CD8-positive, alpha-beta memory T cell (primary cell): ENCODE measurements at regions of chr1 and their contacts with region 1.

Region 1: DNA sequence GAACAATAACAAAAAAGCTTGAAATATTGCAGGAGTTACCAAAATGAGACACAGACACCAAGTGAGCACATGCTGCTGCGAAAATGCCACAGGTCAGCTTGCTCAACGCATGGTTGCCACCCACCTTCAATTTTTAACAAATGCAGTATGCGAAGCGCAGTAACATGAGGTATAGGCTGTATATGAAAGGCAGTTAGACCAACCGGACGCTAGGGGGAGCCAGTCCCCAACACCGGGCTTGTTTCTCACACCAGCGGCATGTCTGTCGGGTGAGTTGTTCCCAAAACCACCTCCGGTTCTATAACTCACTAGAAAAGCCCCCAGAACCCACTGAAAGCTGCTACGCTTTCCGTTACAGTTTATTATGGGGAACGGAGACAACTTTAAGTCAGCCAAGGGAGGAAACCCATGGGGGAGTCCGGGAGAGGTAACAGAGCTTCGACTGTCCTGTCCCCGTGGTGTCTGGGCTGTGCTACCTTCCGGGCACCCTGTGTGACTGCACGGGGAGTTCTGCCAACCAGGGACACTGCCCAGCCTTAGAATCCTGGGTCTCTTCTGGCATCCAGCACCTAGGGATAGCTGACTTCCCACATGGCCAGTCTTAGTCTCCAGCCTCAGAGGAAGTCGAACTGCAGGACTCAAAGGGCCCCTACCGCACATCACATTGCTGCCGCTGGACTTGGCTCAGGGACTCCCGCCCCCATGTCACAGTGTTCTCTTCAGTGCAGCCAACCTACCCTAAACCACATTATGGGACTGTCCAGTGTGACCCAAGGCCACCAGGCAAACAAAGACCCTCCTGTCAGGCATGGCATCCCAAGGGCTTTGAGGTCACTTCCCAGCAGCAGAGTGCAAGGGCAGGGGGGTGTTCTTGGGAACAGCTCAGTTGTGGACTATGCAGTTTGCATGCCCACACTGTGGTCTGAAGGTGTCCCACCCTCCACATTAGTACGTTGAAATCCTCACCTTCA is 14.0 kb downstream of the RNF187 start:
- DNase-seq: peak; percentile 79 to 90 (median 82)
- H3K4me3 ChIP-seq: peak overlapping the region; percentile 46
- H3K4me3 Mint-ChIP-seq: peak overlapping the region; percentile 41 to 84 (median 79)
- H3K27ac ChIP-seq: no peak overlapping the region
- H3K27ac Mint-ChIP-seq: peak overlapping the region; percentile 26 to 86 (median 71)
- H3K4me1 ChIP-seq: peaks cover 14% of the 10 kb centered on the region
- H3K4me1 Mint-ChIP-seq: peaks cover 19 to 38% (median 28%) of the 10 kb centered on the region in 3 donors
- H3K27me3 ChIP-seq: no peaks in the 10 kb centered on the region
- H3K27me3 Mint-ChIP-seq: peaks cover 0 to 3% of the 10 kb centered on the region in 2 donors

Region 2: GRCh38 chr1:228478912-228479711 is 22.1 kb before region 1 on chr1:
- CTCF ChIA-PET with region 1: interaction called, 10 read pairs
- POLR2A ChIA-PET with region 1: no interaction called
- DNase-seq: peak in 1 of 5 donors; percentile 4
- H3K4me3 ChIP-seq: no peak overlapping the region
- H3K4me3 Mint-ChIP-seq: peak overlapping the region; percentile 45 to 80 (median 73)
- H3K27ac ChIP-seq: peak overlapping the region; percentile 46
- H3K27ac Mint-ChIP-seq: peak overlapping the region; percentile 58 to 95 (median 84)
- H3K4me1 ChIP-seq: peaks cover 20% of the 10 kb centered on the region
- H3K4me1 Mint-ChIP-seq: peaks cover 20 to 33% (median 31%) of the 10 kb centered on the region in 3 donors
- H3K27me3 ChIP-seq: no peaks in the 10 kb centered on the region
- H3K27me3 Mint-ChIP-seq: no peaks in the 10 kb centered on the region

Region 3: GRCh38 chr1:228515200-228515834 is 14.1 kb after region 1 on chr1:
- CTCF ChIA-PET with region 1: interaction called, 20 read pairs
- POLR2A ChIA-PET with region 1: no interaction called
- DNase-seq: peak in 3 of 5 donors; percentile 25 to 50 (median 44)
- H3K4me3 ChIP-seq: no peak overlapping the region
- H3K4me3 Mint-ChIP-seq: no peak overlapping the region
- H3K27ac ChIP-seq: no peak overlapping the region
- H3K27ac Mint-ChIP-seq: peak overlapping the region in 1 of 8 donors; percentile 6
- H3K4me1 ChIP-seq: peaks cover 18% of the 10 kb centered on the region
- H3K4me1 Mint-ChIP-seq: peaks cover 6 to 13% (median 7%) of the 10 kb centered on the region in 3 donors
- H3K27me3 ChIP-seq: no peaks in the 10 kb centered on the region
- H3K27me3 Mint-ChIP-seq: peaks cover 0 to 4% of the 10 kb centered on the region in 2 donors